CD4-positive, alpha-beta T cell (primary cell): ENCODE measurements at regions of chr18 and their contacts with region 1.

Region 1: GRCh38 chr18:49768051-49768391 is 45.3 kb downstream of the ACAA2 start:
- DNase-seq: peak in 2 of 14 experiments; percentile 26 to 40
- ATAC-seq: no peak
- H3K4me3 ChIP-seq: no peak overlapping the region
- H3K4me3 Mint-ChIP-seq: no peak overlapping the region
- H3K27ac ChIP-seq: no peak overlapping the region
- H3K27ac Mint-ChIP-seq: no peak overlapping the region
- H3K4me1 ChIP-seq: no peaks in the 10 kb centered on the region
- H3K4me1 Mint-ChIP-seq: peaks cover 6% of the 10 kb centered on the region
- H3K27me3 ChIP-seq: no peaks in the 10 kb centered on the region
- H3K27me3 Mint-ChIP-seq: no peaks in the 10 kb centered on the region
- CTCF ChIP-seq: no peak

Region 2: DNA sequence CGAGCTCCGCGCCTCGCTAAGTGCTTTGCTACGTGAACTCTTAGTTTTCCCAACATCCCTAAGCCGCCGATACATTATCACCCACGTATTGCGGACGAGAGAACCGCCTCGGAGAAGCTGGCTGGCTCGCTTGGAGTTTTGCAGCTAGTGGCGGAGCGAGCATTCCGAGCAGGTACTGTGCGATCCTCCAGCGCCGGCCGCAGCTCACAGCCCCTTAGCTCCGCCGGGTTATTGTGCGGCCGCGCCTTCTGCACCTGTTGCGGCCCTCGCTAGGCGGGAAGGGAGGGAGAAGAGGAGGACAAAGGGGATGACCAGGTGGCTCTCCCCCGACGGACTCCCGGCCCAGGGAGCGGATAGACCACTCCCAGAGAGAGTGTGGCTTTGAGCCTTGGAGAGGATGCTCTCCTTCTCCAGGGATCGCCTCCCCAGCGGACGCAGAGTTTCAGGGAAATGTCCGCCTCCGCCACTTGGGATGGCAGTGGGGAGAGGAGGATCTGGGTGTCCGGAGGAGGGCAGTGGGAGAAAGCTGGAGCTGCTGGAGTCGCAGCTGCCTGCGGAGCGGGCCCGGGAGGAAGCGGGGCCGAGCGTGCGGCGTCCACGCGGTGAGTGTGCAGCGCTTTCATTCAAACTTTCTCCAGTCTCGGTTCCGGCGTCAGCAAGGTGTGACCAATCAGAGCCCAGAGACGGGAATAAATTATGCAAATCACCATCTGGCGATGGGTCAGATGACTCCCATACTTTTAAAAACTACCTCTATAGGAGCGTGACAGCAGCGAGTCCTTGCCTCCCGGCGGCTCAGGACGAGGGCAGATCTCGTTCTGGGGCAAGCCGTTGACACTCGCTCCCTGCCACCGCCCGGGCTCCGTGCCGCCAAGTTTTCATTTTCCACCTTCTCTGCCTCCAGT is 206.5 kb before region 1 on chr18 and contains the start of gene LIPG:
- CTCF ChIA-PET with region 1: no interaction called
- POLR2A ChIA-PET with region 1: no interaction called
- intact Hi-C with region 1: loop called in 1 of 2 experiments (anchors 10 kb)
- DNase-seq: peak in 7 of 14 experiments; percentile 1 to 64 (median 8)
- ATAC-seq: peak; percentile 73
- H3K4me3 ChIP-seq: peak within 1 kb of the TSS; percentile 41
- H3K4me3 Mint-ChIP-seq: peak within 1 kb of the TSS; percentile 79
- H3K27ac ChIP-seq: no peak within 1 kb of the TSS
- H3K27ac Mint-ChIP-seq: no peak within 1 kb of the TSS
- H3K4me1 ChIP-seq: peaks cover 25% of the 10 kb centered on the region
- H3K4me1 Mint-ChIP-seq: peaks cover 31% of the 10 kb centered on the region
- H3K27me3 ChIP-seq: peaks cover 54 to 70% of the 10 kb centered on the region in 2 experiments
- H3K27me3 Mint-ChIP-seq: peaks cover 79% of the 10 kb centered on the region
- CTCF ChIP-seq: no peak
- total RNA-seq, gene LIPG: not detected

Region 3: GRCh38 chr18:49811151-49811938 is 43.3 kb after region 1 on chr18:
- CTCF ChIA-PET with region 1: no interaction called
- POLR2A ChIA-PET with region 1: no interaction called
- intact Hi-C with region 1: no loop called
- DNase-seq: no peak
- ATAC-seq: no peak
- H3K4me3 ChIP-seq: no peak overlapping the region
- H3K4me3 Mint-ChIP-seq: peak overlapping the region; percentile 100
- H3K27ac ChIP-seq: no peak overlapping the region
- H3K27ac Mint-ChIP-seq: peak overlapping the region; percentile 87
- H3K4me1 ChIP-seq: peaks cover 22% of the 10 kb centered on the region
- H3K4me1 Mint-ChIP-seq: peaks cover 54% of the 10 kb centered on the region
- H3K27me3 ChIP-seq: no peaks in the 10 kb centered on the region
- H3K27me3 Mint-ChIP-seq: no peaks in the 10 kb centered on the region
- CTCF ChIP-seq: no peak